Ovary (tissue), 10 donors: ENCODE measurements at regions of chr2 and their contacts with region 1.

Region 1: GRCh38 chr2:164841719-164842623 is at the start of gene COBLL1:
- DNase-seq: peak; percentile 82 to 88 (median 84)
- H3K4me3 ChIP-seq: peak within 1 kb of the TSS; percentile 79
- H3K27ac ChIP-seq: peak within 1 kb of the TSS; percentile 78 to 97
- H3K4me1 ChIP-seq: no peaks in the 10 kb centered on the region
- H3K27me3 ChIP-seq: no peaks in the 10 kb centered on the region
- CTCF ChIP-seq: peak; percentile 75 to 86 (median 85)
- EP300 ChIP-seq: no peak
- POLR2A ChIP-seq: peak; percentile 9
- total RNA-seq, gene COBLL1: 23.8 to 56.8 (median 40.9) TPM

Region 2: DNA sequence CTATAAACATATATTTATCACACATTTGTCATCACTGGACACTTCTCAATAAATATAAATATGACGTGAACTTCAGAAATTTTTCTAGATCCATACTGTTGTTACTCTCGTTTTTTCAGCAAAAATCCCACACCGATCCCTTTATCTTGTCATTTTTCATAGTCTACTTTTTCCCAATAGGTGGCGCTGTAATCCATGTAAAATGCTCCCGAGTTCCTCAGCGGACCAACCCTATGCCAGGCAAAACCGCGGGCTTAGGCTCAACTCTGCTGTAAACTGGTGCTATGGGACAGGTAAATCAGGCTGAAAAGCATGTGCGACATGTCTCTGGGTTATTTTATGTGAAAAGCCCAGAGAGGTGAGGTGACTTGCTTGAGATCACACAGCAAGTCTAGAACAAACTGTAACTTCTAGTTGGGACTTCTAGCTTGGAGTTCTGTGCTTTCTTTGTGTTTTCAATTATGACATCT is 104.3 kb before region 1 on chr2:
- intact Hi-C with region 1: loop called in 2 of 4 experiments (anchors 2 to 5 kb)
- DNase-seq: peak; percentile 47 to 60 (median 58)
- H3K4me3 ChIP-seq: no peak overlapping the region
- H3K27ac ChIP-seq: no peak overlapping the region
- H3K4me1 ChIP-seq: no peaks in the 10 kb centered on the region
- H3K27me3 ChIP-seq: no peaks in the 10 kb centered on the region
- CTCF ChIP-seq: peak; percentile 50 to 78 (median 73)
- EP300 ChIP-seq: no peak
- POLR2A ChIP-seq: no peak

Region 3: GRCh38 chr2:164757924-164758695 is 83.9 kb before region 1 on chr2:
- intact Hi-C with region 1: loop called in 1 of 4 experiments (anchors 5 kb)
- DNase-seq: no peak
- H3K4me3 ChIP-seq: no peak overlapping the region
- H3K27ac ChIP-seq: peak overlapping the region in 1 of 2 donors; percentile 20
- H3K4me1 ChIP-seq: peaks cover 6% of the 10 kb centered on the region
- H3K27me3 ChIP-seq: no peaks in the 10 kb centered on the region
- CTCF ChIP-seq: no peak
- EP300 ChIP-seq: no peak
- POLR2A ChIP-seq: no peak

Region 4: GRCh38 chr2:164782323-164782722 is 59.6 kb before region 1 on chr2:
- intact Hi-C with region 1: loop called in 1 of 4 experiments (anchors 10 kb)
- DNase-seq: peak in 1 of 5 donors; percentile 39
- H3K4me3 ChIP-seq: no peak overlapping the region
- H3K27ac ChIP-seq: no peak overlapping the region
- H3K4me1 ChIP-seq: peaks cover 6% of the 10 kb centered on the region
- H3K27me3 ChIP-seq: no peaks in the 10 kb centered on the region
- CTCF ChIP-seq: no peak
- EP300 ChIP-seq: no peak
- POLR2A ChIP-seq: no peak

Region 5: DNA sequence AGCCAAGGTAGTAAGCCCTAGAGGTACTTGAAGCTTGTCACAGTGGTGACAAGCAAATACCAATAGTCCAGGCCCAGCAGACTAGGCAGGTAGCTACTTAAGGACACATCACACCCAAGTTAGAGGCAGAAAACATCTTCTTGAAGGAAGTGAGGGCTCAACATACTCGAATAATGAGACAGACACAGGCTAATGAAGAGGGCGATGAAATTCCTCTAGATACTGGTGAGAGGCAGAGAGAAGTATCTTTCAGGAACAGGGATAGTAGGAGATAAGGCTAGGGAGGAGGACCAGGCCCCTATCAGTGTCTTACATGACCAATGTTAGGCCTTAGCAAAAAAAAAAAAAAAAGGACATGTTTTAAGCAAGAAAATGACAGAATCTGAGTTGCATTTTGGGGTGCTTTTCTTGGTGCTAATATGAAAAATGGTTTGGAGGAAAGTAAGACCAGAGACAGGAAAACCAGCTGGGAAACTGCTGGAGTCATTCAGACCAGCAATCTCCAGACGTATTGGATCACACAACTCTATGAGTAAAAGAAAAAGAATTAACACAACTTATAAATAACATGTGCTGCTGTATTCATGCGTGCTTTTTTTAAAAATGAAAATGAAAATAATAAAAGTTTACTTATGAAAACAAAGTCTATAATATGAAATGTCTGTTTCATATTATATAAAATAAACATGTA is 38.0 kb before region 1 on chr2:
- intact Hi-C with region 1: no loop called
- DNase-seq: no peak
- H3K4me3 ChIP-seq: no peak overlapping the region
- H3K27ac ChIP-seq: no peak overlapping the region
- H3K4me1 ChIP-seq: peaks cover 4% of the 10 kb centered on the region
- H3K27me3 ChIP-seq: no peaks in the 10 kb centered on the region
- CTCF ChIP-seq: no peak
- EP300 ChIP-seq: no peak
- POLR2A ChIP-seq: no peak

Region 6: DNA sequence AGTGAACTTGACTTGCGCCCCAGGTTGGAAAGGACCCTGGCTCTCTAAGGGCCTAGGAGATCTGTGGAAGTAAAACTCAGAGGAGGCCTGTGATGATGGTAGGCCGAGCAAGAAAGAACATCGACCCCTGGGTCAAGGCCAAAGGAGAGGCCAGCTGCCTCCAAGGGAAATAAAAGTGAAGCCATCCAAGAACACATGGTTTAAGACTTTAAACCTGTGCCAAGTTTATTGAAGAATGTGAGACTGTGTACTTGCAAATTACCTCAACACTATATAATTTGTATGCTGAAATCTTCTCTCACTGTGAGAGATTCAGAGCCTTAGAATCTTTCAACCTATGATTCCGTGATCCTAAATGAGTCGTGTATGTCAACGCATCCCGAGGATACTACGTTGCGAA is 40.3 kb after region 1 on chr2:
- intact Hi-C with region 1: loop called in 1 of 4 experiments (anchors 2 kb)
- DNase-seq: peak; percentile 74 to 92 (median 87)
- H3K4me3 ChIP-seq: no peak overlapping the region
- H3K27ac ChIP-seq: peak overlapping the region; percentile 17 to 77
- H3K4me1 ChIP-seq: peaks cover 8% of the 10 kb centered on the region
- H3K27me3 ChIP-seq: no peaks in the 10 kb centered on the region
- CTCF ChIP-seq: no peak
- EP300 ChIP-seq: no peak
- POLR2A ChIP-seq: no peak

Region 7: DNA sequence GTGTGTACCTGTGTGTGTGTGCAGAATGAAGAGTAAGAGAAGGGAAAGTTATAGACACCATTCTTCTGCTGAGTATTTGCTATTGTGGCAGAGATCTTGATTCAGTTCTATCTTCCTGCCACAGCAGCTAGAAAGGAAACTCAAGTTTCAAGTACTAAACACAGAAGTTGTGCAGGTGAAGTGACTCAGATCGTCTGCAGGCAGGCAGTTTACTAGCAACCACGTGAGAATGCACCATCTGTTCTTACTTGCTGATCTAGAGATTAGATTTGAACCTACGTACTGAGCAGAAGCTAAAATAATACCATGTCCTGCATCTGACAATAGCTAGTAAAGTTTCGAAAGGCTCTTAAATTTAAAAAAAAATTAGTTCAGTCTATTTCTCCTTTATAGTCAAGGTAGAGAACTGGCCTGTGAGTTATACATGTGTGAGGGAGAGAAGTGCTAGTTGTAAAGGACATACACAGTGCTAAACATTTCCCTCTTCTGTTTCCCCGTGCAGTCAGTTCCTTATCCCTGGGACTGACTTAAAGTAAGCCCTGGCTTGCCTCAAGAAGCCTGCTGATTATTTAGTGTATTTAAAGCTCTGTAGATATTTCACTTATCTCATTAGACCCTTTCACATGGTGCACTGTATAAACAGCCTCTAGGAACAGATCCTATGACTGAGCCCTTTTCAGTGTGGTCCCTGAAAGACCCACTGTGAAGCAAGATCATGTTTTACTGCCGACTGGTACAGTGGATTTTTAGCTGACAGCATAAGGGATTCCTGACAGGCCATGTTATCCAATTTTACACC is 68.3 kb after region 1 on chr2:
- intact Hi-C with region 1: loop called in 1 of 4 experiments (anchors 5 kb)
- DNase-seq: no peak
- H3K4me3 ChIP-seq: no peak overlapping the region
- H3K27ac ChIP-seq: peak overlapping the region in 1 of 2 donors; percentile 11
- H3K4me1 ChIP-seq: peaks cover 5% of the 10 kb centered on the region
- H3K27me3 ChIP-seq: no peaks in the 10 kb centered on the region
- CTCF ChIP-seq: no peak
- EP300 ChIP-seq: no peak
- POLR2A ChIP-seq: no peak